ENCODE measurements at regions of chr18 and their contacts with region 1.

Region 1: GRCh38 chr18:9117980-9118841 is 15.7 kb downstream of the NDUFV2 start:
- DNase-seq: no peak
- ATAC-seq: peak; percentile 51
- H3K4me3 Mint-ChIP-seq: peak overlapping the region; percentile 66
- H3K27ac Mint-ChIP-seq: peak overlapping the region; percentile 99
- H3K4me1 Mint-ChIP-seq: peaks cover 80% of the 10 kb centered on the region
- H3K27me3 Mint-ChIP-seq: no peaks in the 10 kb centered on the region

Region 2: DNA sequence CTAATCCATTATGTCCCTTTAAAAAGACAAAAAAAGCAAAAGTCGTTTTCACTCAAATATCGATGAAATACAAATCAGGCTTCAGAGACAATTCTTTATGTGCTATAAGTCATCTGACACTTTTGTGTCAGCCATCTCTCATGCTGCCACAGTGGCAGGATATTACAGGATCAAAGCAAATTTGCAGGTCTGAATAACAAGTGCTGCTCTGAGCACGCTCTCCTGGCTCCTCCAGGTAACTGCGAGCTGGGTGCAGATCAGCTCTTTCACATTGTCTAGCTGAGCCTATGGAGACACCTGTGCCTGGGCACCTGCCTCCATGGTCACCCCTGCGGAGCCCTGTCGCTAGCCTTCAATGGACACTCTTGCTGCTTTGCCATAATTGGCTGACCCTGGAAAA is 759.1 kb before region 1 on chr18:
- CTCF ChIA-PET with region 1: no interaction called
- POLR2A ChIA-PET with region 1: no interaction called
- intact Hi-C with region 1: no loop called
- DNase-seq: no peak
- ATAC-seq: no peak
- H3K4me3 Mint-ChIP-seq: no peak overlapping the region
- H3K27ac Mint-ChIP-seq: no peak overlapping the region
- H3K4me1 Mint-ChIP-seq: no peaks in the 10 kb centered on the region
- H3K27me3 Mint-ChIP-seq: no peaks in the 10 kb centered on the region

Region 3: DNA sequence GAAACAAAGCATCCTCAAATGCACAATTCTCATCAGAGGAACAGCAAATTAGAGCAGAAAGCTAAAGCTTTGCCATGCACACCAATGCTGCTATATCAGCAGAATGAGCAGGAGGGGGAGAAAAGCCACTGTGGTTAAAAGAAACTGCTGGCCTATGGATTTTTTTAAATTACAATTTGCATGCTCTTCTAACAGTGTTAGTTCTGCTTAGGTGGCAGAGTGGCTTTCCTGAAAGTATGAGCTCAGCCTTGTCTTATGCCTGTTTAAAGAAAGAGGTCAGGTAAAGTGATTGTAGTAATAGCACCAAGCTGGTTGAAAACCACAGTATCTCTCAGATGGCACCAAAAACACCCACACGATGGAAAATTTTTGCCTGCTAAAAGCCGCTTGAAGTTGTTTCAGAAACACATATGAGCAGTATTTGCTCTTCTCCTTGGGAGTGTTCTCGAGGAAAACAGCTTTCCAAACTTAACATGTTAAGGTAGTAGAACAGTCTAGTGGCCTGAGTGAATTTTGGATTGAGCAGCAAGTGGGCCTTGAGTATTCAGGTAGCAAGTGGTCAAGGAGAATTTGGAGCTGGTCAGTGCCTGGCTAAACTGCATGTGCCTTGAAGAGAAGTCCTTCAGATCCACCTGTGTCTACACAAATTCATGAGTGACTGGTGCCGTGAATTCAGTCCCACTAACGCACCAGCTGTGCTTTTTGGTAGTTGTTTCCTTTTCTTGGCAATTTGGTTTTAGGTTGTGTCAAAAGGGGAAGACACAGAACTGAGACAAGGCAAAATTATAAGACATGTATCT is 35.3 kb before region 1 on chr18:
- CTCF ChIA-PET with region 1: interaction called, 19 read pairs
- POLR2A ChIA-PET with region 1: interaction called, 45 read pairs
- intact Hi-C with region 1: loop called (anchors 1 kb)
- DNase-seq: peak; percentile 80
- ATAC-seq: peak; percentile 91
- H3K4me3 Mint-ChIP-seq: peak overlapping the region; percentile 62
- H3K27ac Mint-ChIP-seq: peak overlapping the region; percentile 96
- H3K4me1 Mint-ChIP-seq: peaks cover 41% of the 10 kb centered on the region
- H3K27me3 Mint-ChIP-seq: no peaks in the 10 kb centered on the region

Region 4: DNA sequence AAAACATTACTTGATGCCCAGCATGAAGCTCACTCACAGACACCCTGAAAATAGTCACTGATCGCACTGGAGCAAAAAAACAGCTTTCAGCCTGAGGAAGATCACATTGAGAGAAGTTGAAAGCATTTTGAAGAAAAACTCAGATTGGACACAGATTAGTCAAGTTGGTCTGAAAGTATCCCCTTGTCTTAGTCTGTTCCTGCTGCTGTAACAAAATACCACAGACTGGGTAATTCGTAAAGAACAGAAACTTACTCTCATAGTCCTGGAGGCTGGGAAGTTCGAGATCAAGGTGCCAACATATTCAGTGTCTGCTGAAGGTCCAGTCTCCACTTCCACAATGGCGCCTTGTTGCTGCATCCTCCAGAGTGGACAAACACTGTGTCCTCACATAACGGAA is 30.0 kb before region 1 on chr18:
- CTCF ChIA-PET with region 1: interaction called, 6 read pairs
- POLR2A ChIA-PET with region 1: interaction called, 45 read pairs
- intact Hi-C with region 1: loop called (anchors 1 kb)
- DNase-seq: no peak
- ATAC-seq: no peak
- H3K4me3 Mint-ChIP-seq: peak overlapping the region; percentile 46
- H3K27ac Mint-ChIP-seq: peak overlapping the region; percentile 73
- H3K4me1 Mint-ChIP-seq: peaks cover 64% of the 10 kb centered on the region
- H3K27me3 Mint-ChIP-seq: no peaks in the 10 kb centered on the region

Region 5: GRCh38 chr18:9095297-9096006 is 22.8 kb before region 1 on chr18:
- CTCF ChIA-PET with region 1: interaction called, 13 read pairs
- POLR2A ChIA-PET with region 1: interaction called, 11 read pairs
- intact Hi-C with region 1: loop called (anchors 1 kb)
- DNase-seq: peak; percentile 82
- ATAC-seq: peak; percentile 69
- H3K4me3 Mint-ChIP-seq: peak overlapping the region; percentile 68
- H3K27ac Mint-ChIP-seq: peak overlapping the region; percentile 100
- H3K4me1 Mint-ChIP-seq: peaks cover 68% of the 10 kb centered on the region
- H3K27me3 Mint-ChIP-seq: no peaks in the 10 kb centered on the region

Region 6: GRCh38 chr18:9102508-9103375 is 15.5 kb before region 1 on chr18 and contains the start of gene NDUFV2:
- CTCF ChIA-PET with region 1: interaction called, 15 read pairs
- POLR2A ChIA-PET with region 1: interaction called, 14 read pairs
- intact Hi-C with region 1: loop called (anchors 1 kb)
- DNase-seq: peak; percentile 99
- ATAC-seq: peak; percentile 88
- H3K4me3 Mint-ChIP-seq: peak within 1 kb of the TSS; percentile 89
- H3K27ac Mint-ChIP-seq: peak within 1 kb of the TSS; percentile 97
- H3K4me1 Mint-ChIP-seq: peaks cover 40% of the 10 kb centered on the region
- H3K27me3 Mint-ChIP-seq: no peaks in the 10 kb centered on the region
- total RNA-seq, gene NDUFV2: 331 to 372 TPM

Region 7: DNA sequence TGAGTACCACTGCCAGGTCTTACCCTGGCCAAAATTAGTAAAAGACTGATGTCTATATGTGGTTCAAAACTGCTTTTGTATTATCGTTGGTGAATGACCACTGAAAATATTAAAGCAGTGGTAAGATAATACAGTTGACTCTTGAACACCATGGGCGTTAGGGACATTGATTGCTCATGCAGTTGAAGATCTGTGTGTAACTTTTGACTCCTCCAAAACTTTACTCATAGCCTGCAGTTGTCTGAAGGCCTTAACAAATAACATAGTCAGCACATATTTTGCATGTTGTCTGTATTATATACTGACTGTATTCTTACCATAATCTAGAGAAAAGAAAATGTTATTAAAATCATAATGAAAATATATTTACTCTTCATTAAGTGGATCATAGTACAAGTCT is 12.6 kb after region 1 on chr18:
- CTCF ChIA-PET with region 1: interaction called, 6 read pairs
- POLR2A ChIA-PET with region 1: interaction called, 5 read pairs
- intact Hi-C with region 1: loop called (anchors 1 kb)
- DNase-seq: no peak
- ATAC-seq: peak; percentile 27
- H3K4me3 Mint-ChIP-seq: no peak overlapping the region
- H3K27ac Mint-ChIP-seq: no peak overlapping the region
- H3K4me1 Mint-ChIP-seq: peaks cover 48% of the 10 kb centered on the region
- H3K27me3 Mint-ChIP-seq: no peaks in the 10 kb centered on the region

Region 8: GRCh38 chr18:9160014-9160413 is 41.8 kb after region 1 on chr18:
- CTCF ChIA-PET with region 1: no interaction called
- POLR2A ChIA-PET with region 1: no interaction called
- intact Hi-C with region 1: no loop called
- DNase-seq: no peak
- ATAC-seq: no peak
- H3K4me3 Mint-ChIP-seq: no peak overlapping the region
- H3K27ac Mint-ChIP-seq: no peak overlapping the region
- H3K4me1 Mint-ChIP-seq: peaks cover 60% of the 10 kb centered on the region
- H3K27me3 Mint-ChIP-seq: no peaks in the 10 kb centered on the region